Dorsolateral prefrontal cortex (tissue), 120 donors: ENCODE measurements at regions of chr14 and their contacts with region 1.

Region 1: DNA sequence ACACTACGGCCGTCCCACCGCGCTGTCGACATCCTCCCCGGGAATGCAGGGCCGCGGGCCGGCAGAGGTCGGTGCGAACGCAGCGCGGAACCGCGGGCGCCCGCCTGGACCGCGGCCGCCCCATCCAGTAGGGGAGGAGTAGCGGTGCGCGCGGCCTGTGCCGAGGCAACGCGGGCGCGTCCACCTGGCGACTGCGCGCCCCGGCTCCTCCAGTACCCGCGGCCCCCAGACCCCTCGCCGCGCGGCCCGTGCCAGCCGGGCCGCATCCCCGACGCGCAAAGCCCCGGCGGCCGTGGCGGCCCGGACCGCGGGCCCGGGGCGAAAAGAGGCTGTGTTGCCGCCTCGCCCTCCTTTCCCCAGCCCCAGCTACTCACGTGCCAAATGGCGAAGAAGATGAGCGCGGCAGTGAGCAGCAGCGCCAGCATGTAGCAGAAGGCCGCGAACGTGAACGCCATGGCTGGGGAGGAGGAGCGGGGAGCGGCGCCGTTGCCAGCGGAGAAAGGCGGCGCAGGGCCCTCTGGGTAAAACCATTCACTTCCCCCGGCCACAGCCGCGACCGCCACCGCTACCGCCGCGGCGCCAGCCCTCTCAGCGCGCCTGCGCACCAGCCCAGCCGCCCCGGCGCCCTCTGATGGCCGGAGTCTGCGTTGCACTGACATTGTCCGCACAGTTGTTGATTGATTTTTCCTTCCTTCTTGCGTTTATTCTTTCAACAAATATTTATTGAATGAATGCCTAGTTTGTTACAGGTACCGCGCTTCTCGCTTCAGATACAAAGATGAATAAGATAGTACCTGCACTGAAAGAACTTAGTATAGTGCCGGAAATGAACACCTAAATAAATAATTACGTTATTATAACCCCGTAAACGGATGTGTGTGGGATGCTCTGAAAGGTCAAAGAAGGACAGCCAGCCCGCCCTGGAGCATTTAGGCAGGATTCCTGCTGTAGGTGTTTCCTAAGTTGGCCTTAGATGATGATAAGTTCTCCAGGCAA is at the start of gene CNIH1:
- DNase-seq: peak; percentile 81 to 93 (median 89)
- H3K4me3 ChIP-seq: peak within 1 kb of the TSS; percentile 47 to 93 (median 75)
- H3K27ac ChIP-seq: peak within 1 kb of the TSS; percentile 53 to 97 (median 90)
- H3K27me3 ChIP-seq: no peaks in the 10 kb centered on the region
- CTCF ChIP-seq: peak; percentile 92 to 100 (median 99)
- total RNA-seq, gene CNIH1: 43.6 to 104 (median 72.6) TPM

Region 2: GRCh38 chr14:54396493-54397335 is 44.5 kb before region 1 on chr14 and contains the start of gene CDKN3:
- intact Hi-C with region 1: loop called (anchors 2 to 5 kb)
- DNase-seq: peak; percentile 90 to 99 (median 98)
- H3K4me3 ChIP-seq: peak within 1 kb of the TSS; percentile 62 to 98 (median 85)
- H3K27ac ChIP-seq: peak within 1 kb of the TSS in 10 of 59 donors; percentile 4 to 72 (median 58)
- H3K27me3 ChIP-seq: no peaks in the 10 kb centered on the region
- CTCF ChIP-seq: peak; percentile 25 to 88 (median 72)
- total RNA-seq, gene CDKN3: 0.73 to 10.0 (median 3.9) TPM

Region 3: GRCh38 chr14:54488646-54489317 is 47.6 kb after region 1 on chr14 and contains the start of gene GMFB:
- intact Hi-C with region 1: loop called (anchors 2 to 5 kb)
- DNase-seq: peak; percentile 82 to 90 (median 86)
- H3K4me3 ChIP-seq: peak within 1 kb of the TSS; percentile 62 to 100 (median 95)
- H3K27ac ChIP-seq: peak within 1 kb of the TSS; percentile 24 to 98 (median 93)
- H3K27me3 ChIP-seq: no peaks in the 10 kb centered on the region
- CTCF ChIP-seq: peak in 55 of 56 donors; percentile 35 to 85 (median 66)
- total RNA-seq, gene GMFB: 78.7 to 157 (median 110) TPM

Region 4: GRCh38 chr14:55026793-55027561 is 585.8 kb after region 1 on chr14 and contains the starts of genes SOCS4 and WDHD1:
- intact Hi-C with region 1: loop called in 1 of 2 experiments (anchors 2 kb)
- DNase-seq: peak; percentile 91 to 98 (median 95)
- H3K4me3 ChIP-seq: peak within 1 kb of the TSS; percentile 57 to 98 (median 86)
- H3K27ac ChIP-seq: peak within 1 kb of the TSS in 58 of 59 donors; percentile 2 to 92 (median 80)
- H3K27me3 ChIP-seq: no peaks in the 10 kb centered on the region
- CTCF ChIP-seq: peak in 55 of 56 donors; percentile 23 to 83 (median 55)
- total RNA-seq, gene SOCS4: 17.2 to 44.5 (median 26.0) TPM
- total RNA-seq, gene WDHD1: 2.1 to 8.9 (median 5.0) TPM